Posterior vena cava (tissue), 2 donors: ENCODE measurements at regions of chr2 and their contacts with region 1.

Region 1: DNA sequence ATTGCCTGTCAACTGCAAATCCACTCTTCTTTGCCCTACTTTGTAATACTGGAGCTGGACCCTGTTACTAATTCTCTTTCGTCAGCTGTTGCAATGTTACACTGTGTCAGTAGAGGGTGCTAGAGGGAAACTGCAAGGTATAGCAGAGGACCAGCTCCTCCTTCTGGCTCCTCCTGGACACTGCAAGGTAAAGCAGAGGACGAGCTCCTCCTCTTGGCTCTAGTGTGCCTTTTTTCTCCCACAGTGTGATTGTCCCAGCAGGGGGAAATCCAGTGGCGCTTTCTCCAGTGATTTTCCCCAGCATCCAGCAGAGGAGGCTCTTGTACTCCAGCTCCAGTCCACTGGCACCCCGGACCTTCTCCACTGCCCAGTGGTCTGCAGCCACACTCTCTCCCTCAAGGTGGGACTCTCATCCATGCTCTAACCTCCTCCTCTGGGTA is 95.6 kb downstream of the CAPN13 start:
- DNase-seq: no peak

Region 2: GRCh38 chr2:30172627-30173026 is 539.0 kb before region 1 on chr2:
- intact Hi-C with region 1: loop called in 1 of 2 experiments (anchors 5 kb)
- DNase-seq: no peak

Region 3: GRCh38 chr2:30201990-30202389 is 509.7 kb before region 1 on chr2:
- intact Hi-C with region 1: loop called in 1 of 2 experiments (anchors 5 kb)
- DNase-seq: no peak

Region 4: DNA sequence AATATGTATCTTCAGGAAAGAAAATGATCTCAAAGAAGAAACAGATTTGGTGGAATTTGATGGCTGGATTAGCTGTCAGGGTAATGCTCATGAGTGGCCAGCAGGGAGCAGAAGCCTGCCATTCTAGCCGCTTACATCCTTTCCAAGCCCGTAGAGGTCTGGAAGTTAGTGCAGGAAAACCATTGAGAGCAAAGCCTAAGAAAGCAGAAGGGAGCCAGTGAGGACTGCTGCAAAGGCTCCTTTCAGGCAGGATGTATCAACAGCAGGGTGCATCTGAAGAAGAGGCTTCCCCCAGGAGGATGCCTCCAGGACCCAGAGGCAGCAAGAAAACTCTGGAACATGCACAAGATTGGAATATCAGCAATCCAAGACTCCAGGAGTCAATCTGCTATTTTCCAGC is 503.2 kb before region 1 on chr2:
- intact Hi-C with region 1: loop called (anchors 2 to 5 kb)
- DNase-seq: no peak

Region 5: DNA sequence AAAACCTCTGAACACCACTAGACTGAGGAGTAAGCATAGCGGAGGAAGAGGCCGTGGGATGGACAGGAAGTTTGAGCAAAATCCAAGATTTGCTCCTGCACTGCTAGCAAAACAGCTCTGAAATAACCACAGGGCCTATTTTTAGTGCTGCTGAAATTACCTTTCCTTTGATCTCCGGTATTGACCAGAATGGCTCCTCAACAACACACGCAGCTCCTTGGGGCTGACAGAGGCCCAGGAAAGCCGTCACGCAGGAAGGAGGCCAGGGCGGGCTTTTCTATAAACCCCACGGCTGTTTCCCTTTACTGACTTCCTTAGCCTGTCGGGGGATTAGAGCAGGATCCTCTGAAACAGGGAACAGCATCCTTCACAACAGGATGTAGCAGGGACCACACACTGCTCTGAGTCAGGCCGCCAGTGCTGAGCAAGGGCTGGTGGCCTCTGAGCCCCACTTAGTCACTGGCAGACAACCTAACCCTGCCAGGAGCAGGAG is 345.4 kb before region 1 on chr2:
- intact Hi-C with region 1: loop called in 1 of 2 experiments (anchors 10 kb)
- DNase-seq: no peak

Region 6: DNA sequence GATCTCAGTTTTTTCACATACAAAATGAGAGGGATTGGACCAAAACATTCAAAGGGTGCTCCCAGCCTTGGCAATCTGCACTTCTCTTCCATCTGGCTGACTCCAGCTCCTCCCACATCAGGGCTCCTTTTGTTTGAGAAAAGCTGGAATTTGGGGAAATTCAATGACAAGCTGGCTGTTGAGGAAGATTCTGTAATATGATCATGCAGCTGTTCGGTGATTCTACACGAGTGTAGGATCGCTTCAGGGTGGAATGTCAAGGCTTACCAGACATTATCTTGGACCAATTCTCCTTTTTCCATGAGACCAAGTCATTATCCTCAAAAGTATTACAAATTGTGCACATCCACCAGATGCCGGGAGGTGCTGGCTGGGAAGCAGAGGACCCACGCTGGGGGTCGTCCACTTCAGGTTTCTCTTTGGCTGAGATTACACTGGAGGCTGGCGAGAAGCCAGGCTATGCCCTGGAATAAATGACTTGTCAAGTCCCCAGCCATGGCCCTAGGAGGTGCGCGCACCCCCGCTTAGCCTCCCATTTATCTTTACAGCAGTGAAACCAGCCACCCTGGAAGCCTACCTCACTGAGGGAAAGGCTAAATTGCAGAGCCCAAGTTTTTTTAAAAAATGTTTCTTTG is 307.2 kb before region 1 on chr2:
- intact Hi-C with region 1: loop called in 1 of 2 experiments (anchors 10 kb)
- DNase-seq: no peak

Region 7: GRCh38 chr2:30763151-30763660 is 51.5 kb after region 1 on chr2:
- intact Hi-C with region 1: no loop called
- DNase-seq: peak; percentile 25

Region 8: DNA sequence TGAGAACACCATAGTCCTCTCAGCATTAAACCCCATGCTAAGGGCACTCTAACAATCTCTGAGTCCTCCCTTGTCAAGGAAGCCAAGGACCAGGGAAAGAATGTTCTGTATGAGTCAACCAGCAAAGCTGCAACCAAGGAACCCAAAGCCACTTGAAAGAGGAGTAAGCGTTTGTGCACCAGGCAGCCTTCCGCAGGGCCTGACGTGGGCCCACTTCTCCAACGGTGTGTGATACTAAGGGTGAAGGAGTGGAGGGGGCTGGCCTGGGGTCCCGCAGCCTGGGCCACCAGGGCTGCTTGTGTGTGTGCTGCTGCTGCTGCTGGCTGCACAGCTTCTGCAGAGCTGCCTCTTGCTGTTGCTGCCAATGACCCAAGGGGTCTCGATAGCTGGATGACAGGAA is 456.6 kb after region 1 on chr2:
- intact Hi-C with region 1: loop called in 1 of 2 experiments (anchors 2 kb)
- DNase-seq: no peak